Calu3 (cell line): ENCODE measurements at regions of chr10 and their contacts with region 1.

Region 1: GRCh38 chr10:93482145-93482834 is at the start of gene MYOF:
- DNase-seq: peak; percentile 73
- H3K4me3 Mint-ChIP-seq: peak within 1 kb of the TSS; percentile 80
- H3K27ac Mint-ChIP-seq: peak within 1 kb of the TSS; percentile 97
- H3K4me1 Mint-ChIP-seq: peaks cover 7% of the 10 kb centered on the region
- H3K27me3 Mint-ChIP-seq: no peaks in the 10 kb centered on the region
- CTCF ChIP-seq: no peak
- total RNA-seq, gene MYOF: 468 and 474 TPM in 2 replicates

Region 2: GRCh38 chr10:93376372-93377293 is 105.7 kb before region 1 on chr10:
- CTCF ChIA-PET with region 1: interaction called, 20 read pairs
- intact Hi-C with region 1: loop called (anchors 1 kb)
- DNase-seq: peak; percentile 54
- H3K4me3 Mint-ChIP-seq: no peak overlapping the region
- H3K27ac Mint-ChIP-seq: peak overlapping the region; percentile 82
- H3K4me1 Mint-ChIP-seq: peaks cover 23% of the 10 kb centered on the region
- H3K27me3 Mint-ChIP-seq: no peaks in the 10 kb centered on the region
- CTCF ChIP-seq: peak; percentile 73

Region 3: GRCh38 chr10:93458821-93459257 is 23.5 kb before region 1 on chr10:
- CTCF ChIA-PET with region 1: interaction called, 11 read pairs
- intact Hi-C with region 1: no loop called
- DNase-seq: peak; percentile 83
- H3K4me3 Mint-ChIP-seq: peak overlapping the region; percentile 62
- H3K27ac Mint-ChIP-seq: peak overlapping the region; percentile 97
- H3K4me1 Mint-ChIP-seq: peaks cover 59% of the 10 kb centered on the region
- H3K27me3 Mint-ChIP-seq: no peaks in the 10 kb centered on the region
- CTCF ChIP-seq: no peak

Region 4: DNA sequence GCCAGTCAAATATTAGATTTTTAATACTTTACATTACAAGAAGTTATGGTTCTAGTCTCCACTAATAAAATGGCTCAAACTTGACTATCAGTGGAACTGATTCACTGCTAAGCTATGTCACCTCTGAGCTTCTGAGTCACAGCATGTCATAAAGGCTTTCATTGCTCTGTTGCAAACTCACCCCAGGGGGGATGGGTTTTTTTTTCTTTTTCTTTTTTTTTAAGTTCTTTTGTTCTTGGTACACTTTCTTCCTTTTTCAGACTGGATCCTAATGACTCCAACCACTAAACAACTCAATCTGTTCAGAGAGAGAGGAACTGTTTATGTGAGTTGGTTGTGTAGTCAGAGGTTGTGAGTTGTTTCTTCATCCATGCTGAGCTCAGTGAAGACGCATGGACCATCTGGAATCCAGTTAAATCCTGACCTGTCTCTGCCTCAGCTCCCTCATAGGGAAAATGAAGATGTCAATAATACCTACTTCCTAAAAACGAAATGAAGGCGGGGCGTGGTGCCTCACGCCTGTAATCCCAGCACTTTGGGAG is 11.1 kb before region 1 on chr10:
- CTCF ChIA-PET with region 1: interaction called, 10 read pairs
- intact Hi-C with region 1: no loop called
- DNase-seq: no peak
- H3K4me3 Mint-ChIP-seq: peak overlapping the region; percentile 56
- H3K27ac Mint-ChIP-seq: peak overlapping the region; percentile 77
- H3K4me1 Mint-ChIP-seq: peaks cover 50% of the 10 kb centered on the region
- H3K27me3 Mint-ChIP-seq: no peaks in the 10 kb centered on the region
- CTCF ChIP-seq: no peak

Region 5: DNA sequence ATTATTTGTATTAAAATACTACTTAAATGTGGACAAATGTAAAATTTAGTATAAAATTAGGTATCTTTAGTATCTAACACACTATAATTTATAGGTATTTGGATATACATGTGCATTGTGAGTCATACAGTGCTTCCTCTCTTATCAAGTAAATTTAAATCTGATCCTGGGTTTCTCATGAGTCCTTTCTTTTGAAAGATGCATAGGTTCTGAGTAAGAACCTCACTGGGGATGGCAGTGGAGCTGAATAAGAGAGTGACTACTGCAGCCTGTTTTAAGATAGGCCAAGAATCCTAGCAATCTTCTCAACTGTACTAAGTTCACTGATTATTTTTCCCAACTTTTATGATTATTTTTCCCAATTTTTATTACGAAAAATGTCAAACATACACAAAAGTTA is 30.3 kb after region 1 on chr10:
- CTCF ChIA-PET with region 1: no interaction called
- intact Hi-C with region 1: loop called (anchors 2 kb)
- DNase-seq: no peak
- H3K4me3 Mint-ChIP-seq: no peak overlapping the region
- H3K27ac Mint-ChIP-seq: no peak overlapping the region
- H3K4me1 Mint-ChIP-seq: no peaks in the 10 kb centered on the region
- H3K27me3 Mint-ChIP-seq: no peaks in the 10 kb centered on the region
- CTCF ChIP-seq: no peak

Region 6: GRCh38 chr10:93680412-93681047 is 198.2 kb after region 1 on chr10:
- CTCF ChIA-PET with region 1: interaction called, 7 read pairs
- intact Hi-C with region 1: loop called (anchors 2 kb)
- DNase-seq: no peak
- H3K4me3 Mint-ChIP-seq: no peak overlapping the region
- H3K27ac Mint-ChIP-seq: no peak overlapping the region
- H3K4me1 Mint-ChIP-seq: no peaks in the 10 kb centered on the region
- H3K27me3 Mint-ChIP-seq: no peaks in the 10 kb centered on the region
- CTCF ChIP-seq: peak; percentile 25